Prostate gland (tissue), 2 donors: ENCODE measurements at regions of chr15 and their contacts with region 1.

Region 1: GRCh38 chr15:65038838-65039237 is 6.3 kb upstream of the SLC51B start:
- DNase-seq: no peak
- H3K4me3 ChIP-seq: no peak overlapping the region
- H3K27ac ChIP-seq: no peak overlapping the region
- H3K4me1 ChIP-seq: no peaks in the 10 kb centered on the region
- H3K27me3 ChIP-seq: no peaks in the 10 kb centered on the region
- CTCF ChIP-seq: no peak
- POLR2A ChIP-seq: no peak

Region 2: DNA sequence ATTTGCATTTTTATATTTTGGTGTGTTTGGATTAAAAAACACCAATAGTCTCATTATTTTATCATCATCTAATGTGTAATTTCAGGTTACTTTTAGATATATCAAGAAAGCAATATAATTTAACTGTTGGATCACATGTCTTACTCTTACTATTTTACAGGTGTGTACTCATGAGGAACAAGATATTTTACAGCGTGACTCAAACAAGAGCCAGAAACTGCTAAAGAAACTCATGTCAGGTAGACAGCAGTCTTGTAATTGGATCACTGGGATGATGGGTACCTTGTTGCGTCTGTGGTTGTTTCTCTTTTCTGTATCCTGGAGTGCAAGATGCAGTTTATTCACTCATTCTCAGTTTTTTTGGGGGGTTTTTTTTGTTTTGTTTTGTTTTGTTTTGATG is 638.3 kb before region 1 on chr15:
- intact Hi-C with region 1: no loop called
- DNase-seq: peak; percentile 39
- H3K4me3 ChIP-seq: no peak overlapping the region
- H3K27ac ChIP-seq: peak overlapping the region in 1 of 2 donors; percentile 66
- H3K4me1 ChIP-seq: no peaks in the 10 kb centered on the region
- H3K27me3 ChIP-seq: no peaks in the 10 kb centered on the region
- CTCF ChIP-seq: no peak
- POLR2A ChIP-seq: no peak

Region 3: DNA sequence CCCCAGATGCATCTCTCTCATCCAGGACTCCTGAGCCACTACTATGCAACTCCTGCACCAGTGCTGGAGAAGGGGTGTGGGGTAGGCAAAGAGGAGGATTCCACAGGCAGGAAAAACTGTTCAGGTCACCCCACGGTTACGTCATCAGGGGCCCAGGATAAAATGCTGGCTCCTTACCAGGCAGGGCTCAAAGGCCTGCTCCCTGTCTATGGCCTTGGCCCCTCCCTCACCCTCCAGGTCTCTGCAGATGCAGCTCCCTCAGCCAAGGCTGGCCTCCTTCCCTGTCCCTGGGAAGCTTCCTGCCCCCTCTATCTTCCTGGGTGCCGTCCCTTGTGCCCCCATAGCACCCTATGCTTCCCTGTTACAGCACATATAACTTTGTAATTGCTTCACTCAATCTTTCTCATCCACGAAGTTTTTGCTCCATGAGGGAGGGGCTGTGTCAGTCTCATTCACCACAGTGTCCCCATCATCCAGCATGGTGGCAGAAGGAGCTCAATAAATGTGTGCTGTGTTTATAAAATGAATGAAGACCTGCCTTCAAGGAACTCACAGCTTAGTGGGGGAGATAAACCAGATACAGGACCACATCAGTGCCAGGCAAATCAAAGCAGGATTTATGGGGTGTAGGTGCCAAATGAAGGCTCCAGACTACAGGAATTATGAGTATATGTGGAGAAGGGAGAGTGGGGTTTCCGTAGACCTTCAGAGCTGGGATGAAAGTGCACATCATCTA is 56.3 kb after region 1 on chr15:
- intact Hi-C with region 1: loop called (anchors 5 kb)
- DNase-seq: no peak
- H3K4me3 ChIP-seq: no peak overlapping the region
- H3K27ac ChIP-seq: peak overlapping the region; percentile 47 to 53
- H3K4me1 ChIP-seq: no peaks in the 10 kb centered on the region
- H3K27me3 ChIP-seq: no peaks in the 10 kb centered on the region
- CTCF ChIP-seq: no peak
- POLR2A ChIP-seq: no peak

Region 4: DNA sequence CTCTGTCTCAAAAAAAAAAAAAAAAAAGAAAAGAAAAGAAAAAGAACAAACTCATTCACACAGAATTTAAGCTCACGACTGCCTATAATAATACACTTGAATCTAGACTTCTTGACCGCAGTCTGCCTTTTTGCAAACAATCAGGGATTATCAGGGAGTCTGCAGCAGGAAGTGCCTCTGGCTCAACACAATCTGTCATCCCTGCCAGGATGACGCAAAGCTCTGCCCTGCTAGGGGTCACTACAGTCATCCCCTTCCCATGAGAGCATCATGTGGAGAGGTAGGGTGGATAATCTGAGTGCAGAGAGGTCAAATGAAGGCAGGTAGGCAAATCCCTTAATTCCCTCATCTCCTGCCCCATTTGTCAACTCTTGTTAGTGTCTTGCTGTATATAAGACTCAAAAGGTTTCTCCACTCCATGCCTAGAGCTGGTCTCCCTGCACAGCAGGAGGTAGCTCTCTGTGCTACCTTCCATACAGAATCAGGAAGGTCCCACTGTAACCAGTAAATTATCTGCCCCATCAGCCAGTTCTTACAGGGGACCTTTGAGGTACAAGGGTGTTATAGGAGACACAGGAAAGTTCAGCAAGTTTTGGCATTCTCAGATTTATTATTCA is 71.9 kb after region 1 on chr15:
- intact Hi-C with region 1: no loop called
- DNase-seq: no peak
- H3K4me3 ChIP-seq: no peak overlapping the region
- H3K27ac ChIP-seq: no peak overlapping the region
- H3K4me1 ChIP-seq: no peaks in the 10 kb centered on the region
- H3K27me3 ChIP-seq: no peaks in the 10 kb centered on the region
- CTCF ChIP-seq: no peak
- POLR2A ChIP-seq: no peak